CD8-positive, alpha-beta T cell (primary cell): ENCODE measurements at regions of chr14 and their contacts with region 1.

Region 1: DNA sequence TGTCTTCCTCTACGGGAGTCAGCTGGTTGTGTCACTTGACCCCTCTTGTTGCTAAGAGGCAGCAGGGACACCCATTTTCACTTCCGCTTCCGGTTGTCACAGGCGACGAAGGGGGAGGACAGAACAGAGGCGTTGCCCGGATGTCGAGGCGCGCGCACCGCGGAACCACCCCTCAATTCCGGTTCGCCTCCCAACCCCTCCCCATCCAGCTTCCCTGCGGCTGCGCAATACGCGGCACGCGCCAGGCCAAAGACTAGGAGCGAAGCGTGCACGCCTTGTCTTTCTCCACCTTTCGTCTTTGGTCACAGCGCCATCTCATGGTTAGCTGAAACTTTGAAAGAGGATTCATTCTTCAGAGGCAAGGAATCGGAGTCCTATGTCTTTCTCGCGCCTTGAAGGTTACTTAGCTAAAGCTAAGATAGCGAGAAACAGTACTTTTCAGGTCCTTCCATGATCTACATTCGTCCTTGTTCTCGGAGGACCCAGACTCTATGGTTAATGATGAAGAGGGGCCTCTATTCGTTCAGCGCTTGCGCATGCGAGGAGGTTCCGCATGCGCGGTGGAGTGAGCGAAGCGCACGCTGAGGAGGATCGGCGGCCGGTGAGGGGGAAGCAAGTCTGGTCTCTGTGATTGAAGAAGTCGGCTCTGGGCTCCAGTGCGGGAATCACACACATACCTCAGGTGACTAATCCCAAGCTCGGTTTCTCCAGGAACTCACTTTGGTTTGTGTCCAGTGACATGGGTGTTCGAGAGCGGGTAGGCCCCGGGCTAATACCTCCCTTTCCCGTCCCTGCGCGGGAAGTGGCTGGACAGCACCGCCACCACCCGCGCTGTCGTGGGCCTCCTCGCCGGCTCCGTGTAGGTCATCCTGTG is at the starts of genes ATP6V1D and EIF2S1:
- DNase-seq: peak; percentile 99 to 100 (median 99)
- ATAC-seq: peak; percentile 93
- H3K4me3 ChIP-seq: peak within 1 kb of the TSS; percentile 79 to 87
- H3K4me3 Mint-ChIP-seq: peak within 1 kb of the TSS; percentile 99
- H3K27ac ChIP-seq: peak within 1 kb of the TSS; percentile 83 to 93
- H3K27ac Mint-ChIP-seq: peak within 1 kb of the TSS; percentile 97
- H3K4me1 ChIP-seq: peaks cover 29% of the 10 kb centered on the region
- H3K4me1 Mint-ChIP-seq: peaks cover 80% of the 10 kb centered on the region
- H3K27me3 ChIP-seq: no peaks in the 10 kb centered on the region
- H3K27me3 Mint-ChIP-seq: no peaks in the 10 kb centered on the region
- CTCF ChIP-seq: peak; percentile 99
- total RNA-seq, gene ATP6V1D: 30.1 to 34.2 TPM
- total RNA-seq, gene EIF2S1: 29.4 to 34.4 TPM

Region 2: GRCh38 chr14:66507722-66508546 is 852.1 kb before region 1 on chr14 and contains the start of gene GPHN:
- CTCF ChIA-PET with region 1: no interaction called
- POLR2A ChIA-PET with region 1: no interaction called
- intact Hi-C with region 1: loop called (anchors 5 to 10 kb)
- DNase-seq: peak; percentile 53 to 91 (median 82)
- ATAC-seq: peak; percentile 90
- H3K4me3 ChIP-seq: peak within 1 kb of the TSS; percentile 75 to 81
- H3K4me3 Mint-ChIP-seq: peak within 1 kb of the TSS; percentile 99
- H3K27ac ChIP-seq: peak within 1 kb of the TSS; percentile 55 to 67
- H3K27ac Mint-ChIP-seq: peak within 1 kb of the TSS; percentile 91
- H3K4me1 ChIP-seq: no peaks in the 10 kb centered on the region
- H3K4me1 Mint-ChIP-seq: peaks cover 35% of the 10 kb centered on the region
- H3K27me3 ChIP-seq: no peaks in the 10 kb centered on the region
- H3K27me3 Mint-ChIP-seq: no peaks in the 10 kb centered on the region
- CTCF ChIP-seq: no peak
- total RNA-seq, gene GPHN: 8.2 to 9.3 TPM

Region 3: GRCh38 chr14:67240978-67241414 is 119.0 kb before region 1 on chr14:
- CTCF ChIA-PET with region 1: no interaction called
- POLR2A ChIA-PET with region 1: interaction called, 8 read pairs
- intact Hi-C with region 1: loop called (anchors 1 kb)
- DNase-seq: peak; percentile 81 to 96 (median 91)
- ATAC-seq: peak; percentile 93
- H3K4me3 ChIP-seq: peak overlapping the region; percentile 65 to 76
- H3K4me3 Mint-ChIP-seq: peak overlapping the region; percentile 91
- H3K27ac ChIP-seq: peak overlapping the region; percentile 62
- H3K27ac Mint-ChIP-seq: peak overlapping the region; percentile 82
- H3K4me1 ChIP-seq: peaks cover 14% of the 10 kb centered on the region
- H3K4me1 Mint-ChIP-seq: peaks cover 29% of the 10 kb centered on the region
- H3K27me3 ChIP-seq: no peaks in the 10 kb centered on the region
- H3K27me3 Mint-ChIP-seq: no peaks in the 10 kb centered on the region
- CTCF ChIP-seq: no peak

Region 4: GRCh38 chr14:67514650-67515385 is 154.8 kb after region 1 on chr14:
- CTCF ChIA-PET with region 1: no interaction called
- POLR2A ChIA-PET with region 1: no interaction called
- intact Hi-C with region 1: loop called in 1 of 2 experiments (anchors 1 kb)
- DNase-seq: peak in 8 of 9 experiments; percentile 11 to 75 (median 43)
- ATAC-seq: peak; percentile 71
- H3K4me3 ChIP-seq: peak overlapping the region; percentile 71 to 75
- H3K4me3 Mint-ChIP-seq: peak overlapping the region; percentile 91
- H3K27ac ChIP-seq: peak overlapping the region; percentile 62 to 79
- H3K27ac Mint-ChIP-seq: peak overlapping the region; percentile 89
- H3K4me1 ChIP-seq: peaks cover 16% of the 10 kb centered on the region
- H3K4me1 Mint-ChIP-seq: peaks cover 36% of the 10 kb centered on the region
- H3K27me3 ChIP-seq: no peaks in the 10 kb centered on the region
- H3K27me3 Mint-ChIP-seq: no peaks in the 10 kb centered on the region
- CTCF ChIP-seq: no peak

Region 5: GRCh38 chr14:67599698-67600561 is 239.9 kb after region 1 on chr14 and contains the start of gene PIGH:
- CTCF ChIA-PET with region 1: no interaction called
- POLR2A ChIA-PET with region 1: interaction called, 3 read pairs
- intact Hi-C with region 1: loop called (anchors 1 to 2 kb)
- DNase-seq: peak; percentile 90 to 97 (median 94)
- ATAC-seq: peak; percentile 97
- H3K4me3 ChIP-seq: peak within 1 kb of the TSS; percentile 92 to 99
- H3K4me3 Mint-ChIP-seq: peak within 1 kb of the TSS; percentile 98
- H3K27ac ChIP-seq: peak within 1 kb of the TSS; percentile 74 to 87
- H3K27ac Mint-ChIP-seq: peak within 1 kb of the TSS; percentile 98
- H3K4me1 ChIP-seq: peaks cover 19% of the 10 kb centered on the region
- H3K4me1 Mint-ChIP-seq: peaks cover 49% of the 10 kb centered on the region
- H3K27me3 ChIP-seq: no peaks in the 10 kb centered on the region
- H3K27me3 Mint-ChIP-seq: no peaks in the 10 kb centered on the region
- CTCF ChIP-seq: peak; percentile 52
- total RNA-seq, gene PIGH: 66.0 to 67.8 TPM

Region 6: GRCh38 chr14:67674481-67675169 is 314.6 kb after region 1 on chr14 and contains the start of gene VTI1B:
- CTCF ChIA-PET with region 1: no interaction called
- POLR2A ChIA-PET with region 1: interaction called, 3 read pairs
- intact Hi-C with region 1: loop called (anchors 1 to 5 kb)
- DNase-seq: peak; percentile 64 to 89 (median 79)
- ATAC-seq: peak; percentile 92
- H3K4me3 ChIP-seq: peak within 1 kb of the TSS; percentile 78 to 82
- H3K4me3 Mint-ChIP-seq: peak within 1 kb of the TSS; percentile 94
- H3K27ac ChIP-seq: peak within 1 kb of the TSS; percentile 93 to 95
- H3K27ac Mint-ChIP-seq: peak within 1 kb of the TSS; percentile 93
- H3K4me1 ChIP-seq: peaks cover 32% of the 10 kb centered on the region
- H3K4me1 Mint-ChIP-seq: peaks cover 39% of the 10 kb centered on the region
- H3K27me3 ChIP-seq: no peaks in the 10 kb centered on the region
- H3K27me3 Mint-ChIP-seq: no peaks in the 10 kb centered on the region
- CTCF ChIP-seq: no peak
- total RNA-seq, gene VTI1B: 27.6 to 31.1 TPM